A673 (cell line): ENCODE measurements at regions of chr1 and their contacts with region 1.

Region 1: DNA sequence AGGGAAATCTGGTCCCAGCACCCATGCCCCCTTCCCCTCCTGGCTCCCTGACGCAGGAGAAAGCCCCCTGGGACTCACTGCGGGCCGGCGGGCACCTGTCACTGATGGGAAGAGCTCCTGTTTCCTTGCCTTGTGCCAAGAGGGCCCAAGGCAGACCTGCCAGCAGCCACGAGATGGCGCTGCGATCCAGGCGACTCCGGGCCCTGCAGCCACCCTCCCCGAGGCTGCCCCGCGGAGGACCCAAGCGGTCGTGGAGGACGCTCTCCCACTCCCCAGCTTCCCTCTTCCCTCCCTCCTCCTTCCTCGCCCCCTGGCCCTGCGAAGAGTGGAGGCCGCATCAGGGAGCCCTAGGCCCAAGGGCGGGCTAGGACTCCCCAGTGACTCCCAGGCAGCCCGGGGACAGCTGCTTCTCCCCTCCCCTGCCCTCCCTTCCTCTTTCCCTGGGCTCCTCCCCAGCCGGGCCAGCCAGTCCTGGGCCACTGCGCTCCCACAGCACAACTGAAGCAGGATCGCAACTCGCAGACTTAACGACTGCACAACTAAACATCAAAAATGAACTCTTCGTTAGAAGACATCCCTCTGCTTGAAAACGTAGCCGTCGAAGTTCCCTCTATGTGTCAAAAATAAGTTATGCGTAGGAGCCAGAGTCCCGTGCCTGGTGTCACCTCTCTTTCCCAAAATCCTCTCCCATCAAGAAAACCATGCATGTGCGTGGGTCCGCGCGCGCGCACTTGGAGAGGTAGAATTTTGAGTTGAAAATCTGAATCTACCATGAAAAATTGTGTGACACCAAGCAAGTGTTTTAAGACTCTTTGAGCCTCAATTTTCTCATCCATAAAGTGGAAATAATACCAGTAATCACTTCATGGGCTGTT is 34.2 kb downstream of the BATF3 start:
- DNase-seq: peak; percentile 87
- H3K4me3 ChIP-seq: peak overlapping the region; percentile 50
- H3K27ac ChIP-seq: peak overlapping the region; percentile 49
- H3K4me1 ChIP-seq: peaks cover 17% of the 10 kb centered on the region
- H3K27me3 ChIP-seq: no peaks in the 10 kb centered on the region
- CTCF ChIP-seq: peak; percentile 97

Region 2: DNA sequence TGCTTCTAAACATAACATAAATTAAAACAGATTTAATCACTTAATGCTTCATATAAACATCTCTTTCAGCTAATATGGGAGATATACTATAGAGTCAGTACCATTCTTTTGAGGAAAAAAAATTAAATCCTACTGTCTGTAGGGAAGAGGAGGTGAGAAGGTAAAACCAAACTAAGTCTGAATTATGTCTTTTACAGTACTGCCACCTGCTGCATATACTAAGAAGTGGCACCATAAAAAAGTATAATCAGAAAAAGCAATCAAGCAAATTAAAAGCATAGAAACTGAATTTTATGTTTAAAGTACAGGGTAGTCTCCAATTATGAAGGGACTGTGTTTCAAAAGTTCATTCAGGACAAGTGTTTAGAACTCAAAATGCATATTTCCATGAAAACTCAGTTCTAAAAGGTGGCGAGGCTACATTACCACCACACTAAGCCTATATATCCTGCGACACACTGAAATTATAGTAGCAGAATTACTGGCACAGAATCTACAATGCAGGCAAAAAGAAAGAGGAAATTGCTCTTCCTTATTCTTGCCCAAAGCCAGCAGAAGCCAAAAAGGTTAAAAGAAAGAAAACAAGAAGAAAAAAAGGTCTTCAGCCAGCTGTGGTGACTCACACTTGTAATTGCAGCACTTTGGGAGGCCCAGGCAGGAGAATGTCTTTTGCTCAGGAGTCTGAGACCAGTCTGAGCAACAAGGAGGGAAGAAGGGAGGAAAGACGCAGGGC is 117.1 kb after region 1 on chr1:
- CTCF ChIA-PET with region 1: interaction called, 7 read pairs
- POLR2A ChIA-PET with region 1: no interaction called
- intact Hi-C with region 1: loop called (anchors 1 kb)
- DNase-seq: peak; percentile 45
- H3K4me3 ChIP-seq: no peak overlapping the region
- H3K27ac ChIP-seq: no peak overlapping the region
- H3K4me1 ChIP-seq: no peaks in the 10 kb centered on the region
- H3K27me3 ChIP-seq: no peaks in the 10 kb centered on the region
- CTCF ChIP-seq: peak; percentile 68